ENCODE measurements at regions of chr14 and their contacts with region 1.

Region 1: DNA sequence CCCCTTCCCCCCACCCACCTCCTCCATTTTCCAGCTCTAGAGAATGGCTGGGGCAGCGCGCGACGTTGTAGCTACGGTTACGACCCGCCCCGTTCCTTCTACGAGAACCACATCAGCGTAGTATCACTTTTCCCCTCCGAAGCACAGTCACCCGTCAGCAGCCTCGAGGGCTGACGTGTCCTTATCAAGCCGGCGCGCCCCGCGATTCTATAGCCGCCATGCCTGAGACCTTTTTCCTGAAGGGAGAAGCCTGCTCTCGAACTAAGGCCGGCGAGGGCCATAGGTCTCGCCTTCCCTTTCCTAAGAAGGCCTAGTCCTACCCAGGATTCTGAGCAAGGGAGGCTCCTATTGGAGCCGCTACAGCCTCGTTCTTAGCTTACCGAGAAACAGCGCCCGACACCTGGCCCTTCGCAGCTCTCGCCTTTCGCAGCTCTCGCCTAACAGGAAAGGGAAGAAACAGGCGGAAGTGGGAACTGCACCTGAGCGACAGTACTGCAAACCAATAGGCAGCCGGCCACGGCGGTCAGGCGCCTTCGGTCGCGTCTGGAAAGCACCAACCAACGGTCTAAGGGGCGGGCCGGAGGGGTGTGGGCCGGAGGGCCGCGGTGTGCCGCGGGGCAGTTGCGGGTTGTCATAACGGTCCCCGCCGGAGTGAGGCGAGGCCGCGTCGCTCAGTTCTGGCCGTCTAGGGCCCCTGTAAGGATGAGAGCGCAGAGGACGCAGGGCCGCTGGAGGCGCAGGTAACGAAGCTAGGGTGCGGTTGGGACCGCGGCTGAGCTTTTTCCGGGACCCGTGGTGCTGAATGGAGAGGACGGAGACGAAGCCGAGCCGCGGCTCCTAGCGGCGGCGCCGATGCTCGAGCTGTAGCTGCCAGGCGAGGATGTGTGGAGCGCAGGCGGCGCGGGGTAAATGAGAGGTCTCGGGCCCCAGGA is at the starts of genes MGAT2 and RPL36AL:
- DNase-seq: peak; percentile 99
- ATAC-seq: peak; percentile 97 to 99 (median 98)
- H3K4me3 ChIP-seq: peak within 1 kb of the TSS; percentile 80
- H3K27ac ChIP-seq: peak within 1 kb of the TSS; percentile 96
- H3K4me1 ChIP-seq: peaks cover 46% of the 10 kb centered on the region
- H3K27me3 ChIP-seq: no peaks in the 10 kb centered on the region
- CTCF ChIP-seq: peak; percentile 14
- total RNA-seq, gene MGAT2: 8.0 to 12.4 (median 9.3) TPM
- total RNA-seq, gene RPL36AL: 84.6 to 178 (median 152) TPM

Region 2: DNA sequence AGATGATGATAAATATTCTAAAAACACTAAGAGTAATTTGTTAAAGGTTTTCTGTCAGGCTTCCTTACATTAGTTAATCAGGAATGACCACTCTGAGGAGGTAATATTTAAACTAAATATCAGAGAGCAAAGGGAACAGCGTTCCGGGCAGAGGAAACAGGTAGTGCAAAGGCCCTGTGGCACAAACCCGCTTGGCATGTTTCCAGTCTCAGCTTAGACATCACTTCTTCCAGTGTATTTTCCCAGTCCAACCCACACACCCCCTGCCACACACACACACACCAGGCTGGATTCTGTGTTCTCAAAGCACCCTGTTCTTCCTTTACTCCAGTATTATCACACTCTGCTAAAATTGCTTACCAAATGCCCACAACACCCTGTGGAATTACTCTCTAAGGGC is 281.3 kb before region 1 on chr14:
- intact Hi-C with region 1: no loop called
- DNase-seq: no peak
- ATAC-seq: no peak
- H3K4me3 ChIP-seq: no peak overlapping the region
- H3K27ac ChIP-seq: no peak overlapping the region
- H3K4me1 ChIP-seq: no peaks in the 10 kb centered on the region
- H3K27me3 ChIP-seq: no peaks in the 10 kb centered on the region
- CTCF ChIP-seq: no peak

Region 3: DNA sequence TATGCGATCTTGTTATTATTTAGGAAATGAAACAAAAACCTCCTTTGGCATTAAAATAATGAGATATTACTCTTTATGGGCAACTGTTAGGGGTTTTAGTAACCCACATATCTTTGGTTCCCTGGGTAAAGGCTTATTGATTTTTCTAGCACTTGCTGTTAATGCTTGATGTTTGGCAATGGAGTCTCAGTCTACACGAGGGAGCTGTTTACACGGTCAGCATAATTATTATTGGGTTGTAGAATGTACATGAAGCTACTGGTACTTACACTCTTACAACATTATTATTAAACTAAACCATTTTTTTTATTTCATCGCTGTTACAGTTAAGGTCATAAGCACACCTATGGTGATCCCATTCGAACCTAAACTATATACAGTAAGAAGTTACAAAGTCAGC is 46.4 kb before region 1 on chr14:
- intact Hi-C with region 1: no loop called
- DNase-seq: no peak
- ATAC-seq: no peak
- H3K4me3 ChIP-seq: no peak overlapping the region
- H3K27ac ChIP-seq: no peak overlapping the region
- H3K4me1 ChIP-seq: peaks cover 3% of the 10 kb centered on the region
- H3K27me3 ChIP-seq: no peaks in the 10 kb centered on the region
- CTCF ChIP-seq: no peak

Region 4: GRCh38 chr14:49585803-49586672 is 34.4 kb before region 1 on chr14 and contains the start of gene RPS29:
- intact Hi-C with region 1: loop called in 1 of 2 experiments (anchors 5 kb)
- DNase-seq: peak; percentile 97 to 99
- ATAC-seq: peak; percentile 95 to 97 (median 96)
- H3K4me3 ChIP-seq: peak within 1 kb of the TSS; percentile 72
- H3K27ac ChIP-seq: peak within 1 kb of the TSS; percentile 90
- H3K4me1 ChIP-seq: peaks cover 20% of the 10 kb centered on the region
- H3K27me3 ChIP-seq: no peaks in the 10 kb centered on the region
- CTCF ChIP-seq: no peak
- total RNA-seq, gene RPS29: 835 to 1,213 (median 1,105) TPM

Region 5: DNA sequence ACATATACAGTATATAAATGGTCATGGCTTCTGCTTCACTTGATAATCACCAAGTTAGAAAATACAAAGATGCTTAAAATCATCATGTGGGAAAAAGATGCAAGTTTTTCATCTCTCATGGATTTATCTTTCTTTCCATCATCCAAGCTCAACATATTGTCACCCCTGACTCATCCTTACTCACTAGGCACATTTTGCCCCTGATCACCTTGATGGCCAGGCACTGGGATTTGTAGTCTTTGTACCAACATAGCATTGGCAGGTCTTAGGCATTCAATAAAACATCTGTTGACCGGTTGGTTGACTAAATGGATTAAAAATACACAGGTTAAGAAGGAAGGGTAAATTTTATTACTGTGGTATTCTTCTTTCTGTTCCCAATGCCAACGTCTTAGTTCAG is 175.6 kb after region 1 on chr14:
- intact Hi-C with region 1: no loop called
- DNase-seq: no peak
- ATAC-seq: no peak
- H3K4me3 ChIP-seq: no peak overlapping the region
- H3K27ac ChIP-seq: no peak overlapping the region
- H3K4me1 ChIP-seq: no peaks in the 10 kb centered on the region
- H3K27me3 ChIP-seq: no peaks in the 10 kb centered on the region
- CTCF ChIP-seq: no peak

Region 6: DNA sequence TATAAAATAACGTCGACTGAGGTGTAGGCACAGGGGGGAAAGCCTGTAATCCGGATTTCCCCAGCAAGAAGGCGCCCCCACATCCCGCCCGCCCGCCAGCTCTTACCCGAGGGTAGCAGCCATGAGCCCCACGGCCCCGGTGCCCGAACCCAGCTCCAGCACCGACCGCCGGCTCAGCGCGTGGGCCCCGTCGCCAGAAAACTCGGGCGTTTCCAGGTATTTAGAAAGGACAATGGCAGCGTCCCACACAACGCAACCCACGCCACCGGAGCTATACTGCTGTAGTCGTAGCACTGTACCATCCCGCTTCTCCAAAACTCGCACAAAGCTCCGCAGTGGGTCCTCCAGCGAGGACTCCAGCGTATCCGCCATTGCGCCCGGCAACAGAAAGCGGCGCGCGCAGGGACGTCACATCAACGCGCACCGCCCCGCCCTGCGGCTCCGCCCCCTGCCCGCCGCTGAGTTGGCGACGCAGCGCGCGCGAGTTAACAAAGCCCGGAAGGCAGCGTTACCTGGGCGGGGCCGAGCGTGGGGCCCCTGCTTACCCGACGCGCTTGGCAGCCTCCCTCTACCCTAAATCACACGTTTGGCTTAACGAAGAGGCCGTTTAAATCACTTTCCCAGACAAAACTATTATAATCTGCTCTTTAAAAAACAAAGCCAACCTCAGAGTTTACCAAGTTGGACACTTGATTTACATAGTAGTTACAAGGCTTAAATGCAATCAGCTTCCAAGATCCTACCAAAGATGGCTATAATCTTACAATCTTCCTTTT is 495.9 kb after region 1 on chr14 and contains the start of gene VCPKMT:
- intact Hi-C with region 1: loop called in 1 of 2 experiments (anchors 10 kb)
- DNase-seq: peak; percentile 95 to 96
- ATAC-seq: peak; percentile 99
- H3K4me3 ChIP-seq: peak within 1 kb of the TSS; percentile 77
- H3K27ac ChIP-seq: peak within 1 kb of the TSS; percentile 94
- H3K4me1 ChIP-seq: peaks cover 18% of the 10 kb centered on the region
- H3K27me3 ChIP-seq: no peaks in the 10 kb centered on the region
- CTCF ChIP-seq: no peak
- total RNA-seq, gene VCPKMT: 1.8 to 6.3 (median 3.3) TPM